ENCODE measurements at regions of chr1 and their contacts with region 1.

Region 1: DNA sequence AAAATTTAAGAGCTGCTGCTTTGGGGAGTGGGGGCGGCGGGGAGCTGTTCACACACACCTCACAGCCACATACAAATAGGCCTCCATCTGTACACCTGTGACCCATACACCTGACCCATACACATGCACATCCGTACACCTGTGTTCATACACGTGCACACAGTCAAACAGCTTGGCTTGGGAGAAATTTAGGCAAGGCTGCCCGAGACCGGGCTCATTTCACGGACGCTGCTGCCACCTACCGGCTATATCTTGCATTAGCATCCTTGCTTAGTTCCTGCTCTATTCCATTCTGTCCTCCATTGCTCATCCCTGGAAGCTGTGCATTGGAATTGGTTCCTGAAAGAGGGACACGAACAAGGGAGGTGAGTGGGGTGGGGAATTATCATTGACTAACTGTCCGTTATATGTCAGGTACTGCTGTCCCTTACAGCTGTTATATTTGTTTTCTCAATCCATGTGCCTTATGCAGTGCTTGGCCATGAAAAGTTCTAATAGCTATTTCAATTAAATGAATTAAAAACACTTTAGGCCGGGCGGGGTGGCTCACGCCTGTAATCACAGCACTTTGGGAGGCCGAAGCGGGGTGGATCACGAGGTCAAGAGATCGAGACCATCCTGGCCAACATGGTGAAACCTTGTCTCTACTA is 37.1 kb upstream of the EPB41 start:
- DNase-seq: peak; percentile 86
- H3K4me3 ChIP-seq: no peak overlapping the region
- H3K27ac ChIP-seq: no peak overlapping the region
- H3K4me1 ChIP-seq: no peaks in the 10 kb centered on the region
- H3K27me3 ChIP-seq: no peaks in the 10 kb centered on the region
- CTCF ChIP-seq: peak; percentile 86 to 93 (median 91)
- POLR2A ChIP-seq: no peak

Region 2: GRCh38 chr1:28552758-28553663 is 324.2 kb before region 1 on chr1 and contains the start of gene TRNAU1AP:
- intact Hi-C with region 1: no loop called
- DNase-seq: peak; percentile 96
- H3K4me3 ChIP-seq: peak within 1 kb of the TSS; percentile 86 to 95
- H3K27ac ChIP-seq: peak within 1 kb of the TSS; percentile 83 to 88
- H3K4me1 ChIP-seq: peaks cover 10% of the 10 kb centered on the region
- H3K27me3 ChIP-seq: no peaks in the 10 kb centered on the region
- CTCF ChIP-seq: no peak
- POLR2A ChIP-seq: no peak
- total RNA-seq, gene TRNAU1AP: 15.5 to 22.5 TPM

Region 3: DNA sequence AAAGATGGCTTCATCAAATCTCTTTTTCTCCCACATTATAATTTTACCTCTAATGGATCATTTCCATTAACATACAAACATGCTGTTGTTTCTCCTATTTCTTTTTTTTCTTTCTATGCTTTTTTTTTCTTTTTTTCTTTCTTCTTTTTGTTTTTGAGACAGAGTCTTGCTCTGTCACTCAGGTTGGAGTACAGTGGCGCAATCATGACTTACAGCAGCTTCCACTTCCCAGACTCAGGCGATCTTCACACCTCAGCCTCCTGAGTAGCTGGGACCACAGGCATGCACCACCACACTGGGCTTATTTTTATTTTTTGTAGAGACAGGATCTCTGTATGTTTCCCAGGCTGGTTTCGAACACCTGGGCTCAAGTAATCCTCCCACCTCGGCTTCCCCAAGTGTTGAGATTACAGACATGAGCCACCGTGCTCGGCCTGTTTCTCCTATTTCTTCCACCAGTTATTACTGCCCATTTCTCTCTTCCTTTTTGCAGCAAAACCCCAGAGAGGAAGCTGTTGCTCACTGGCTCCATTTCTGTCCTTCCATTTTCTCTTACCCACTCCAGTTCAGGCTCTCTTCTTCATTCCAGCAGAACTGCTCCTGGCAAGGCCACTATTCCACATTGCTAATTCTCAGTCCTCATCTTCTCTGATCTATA is 97.4 kb before region 1 on chr1:
- intact Hi-C with region 1: loop called (anchors 10 kb)
- DNase-seq: no peak
- H3K4me3 ChIP-seq: no peak overlapping the region
- H3K27ac ChIP-seq: peak overlapping the region in 1 of 2 donors; percentile 41
- H3K4me1 ChIP-seq: peaks cover 32% of the 10 kb centered on the region
- H3K27me3 ChIP-seq: no peaks in the 10 kb centered on the region
- CTCF ChIP-seq: no peak
- POLR2A ChIP-seq: no peak

Region 4: DNA sequence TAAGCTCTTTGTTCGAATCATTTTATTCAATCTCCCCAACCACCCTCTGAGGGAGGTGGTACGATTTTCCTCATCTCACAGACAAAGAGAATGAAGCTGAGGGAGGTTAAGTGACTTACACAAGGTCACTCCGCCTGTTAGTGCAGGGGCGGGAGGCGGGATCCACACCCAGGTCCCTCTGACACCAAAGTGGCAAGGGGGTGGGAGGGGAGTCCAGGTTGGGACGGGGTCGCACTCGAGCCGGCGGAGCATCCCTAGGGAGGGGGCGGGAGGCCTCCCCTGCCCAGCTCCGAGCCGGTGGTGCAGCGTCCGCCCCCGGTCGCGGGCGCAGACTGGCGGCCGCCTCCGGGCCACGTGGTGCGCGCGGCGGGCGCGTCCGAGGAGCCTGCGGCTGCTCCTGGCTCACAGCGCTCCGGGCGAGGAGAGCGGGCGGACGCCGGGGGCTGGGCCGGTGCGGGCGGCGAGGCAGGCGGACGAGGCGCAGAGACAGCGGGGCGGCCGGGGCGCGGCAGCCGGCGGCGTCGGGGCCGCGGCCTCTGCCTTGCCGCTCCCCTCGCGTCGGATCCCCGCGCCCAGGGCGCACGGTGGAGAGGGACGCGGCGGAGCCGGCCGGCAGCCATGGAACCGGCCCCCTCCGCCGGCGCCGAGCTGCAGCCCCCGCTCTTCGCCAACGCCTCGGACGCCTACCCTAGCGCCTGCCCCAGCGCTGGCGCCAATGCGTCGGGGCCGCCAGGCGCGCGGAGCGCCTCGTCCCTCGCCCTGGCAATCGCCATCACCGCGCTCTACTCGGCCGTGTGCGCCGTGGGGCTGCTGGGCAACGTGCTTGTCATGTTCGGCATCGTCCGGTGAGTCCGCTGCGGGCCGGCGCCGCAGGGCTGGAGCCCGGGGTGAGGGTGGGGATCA is 65.2 kb before region 1 on chr1 and contains the start of gene OPRD1:
- intact Hi-C with region 1: no loop called
- DNase-seq: no peak
- H3K4me3 ChIP-seq: peak within 1 kb of the TSS in 1 of 2 donors; percentile 31
- H3K27ac ChIP-seq: no peak within 1 kb of the TSS
- H3K4me1 ChIP-seq: peaks cover 7% of the 10 kb centered on the region
- H3K27me3 ChIP-seq: no peaks in the 10 kb centered on the region
- CTCF ChIP-seq: no peak
- POLR2A ChIP-seq: no peak
- total RNA-seq, gene OPRD1: 0.63 to 0.74 TPM

Region 5: DNA sequence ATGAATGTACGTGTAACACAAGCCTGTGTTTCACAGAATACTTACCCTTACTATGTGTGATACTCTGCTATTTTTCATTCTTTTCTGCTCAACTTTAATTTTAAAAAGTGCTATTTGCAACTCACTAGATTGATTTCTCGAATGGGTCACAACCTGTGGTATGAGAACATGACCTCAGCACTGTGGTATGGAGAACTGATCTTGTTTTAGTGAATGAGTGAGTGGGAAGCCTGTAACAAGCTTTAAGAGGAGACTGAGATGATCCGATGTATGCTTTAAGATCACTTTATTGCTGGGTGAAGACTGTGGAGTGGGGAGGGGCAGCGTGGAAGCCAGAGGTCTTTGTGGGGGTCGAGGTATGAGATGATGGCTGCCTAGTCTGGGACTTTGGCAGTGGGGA is 331.9 kb after region 1 on chr1:
- intact Hi-C with region 1: loop called (anchors 5 kb)
- DNase-seq: no peak
- H3K4me3 ChIP-seq: no peak overlapping the region
- H3K27ac ChIP-seq: no peak overlapping the region
- H3K4me1 ChIP-seq: no peaks in the 10 kb centered on the region
- H3K27me3 ChIP-seq: no peaks in the 10 kb centered on the region
- CTCF ChIP-seq: no peak
- POLR2A ChIP-seq: no peak

Measured in testis (tissue), 5 donors.